Head of caudate nucleus (tissue), 42 donors: ENCODE measurements at regions of chr20 and their contacts with region 1.

Region 1: DNA sequence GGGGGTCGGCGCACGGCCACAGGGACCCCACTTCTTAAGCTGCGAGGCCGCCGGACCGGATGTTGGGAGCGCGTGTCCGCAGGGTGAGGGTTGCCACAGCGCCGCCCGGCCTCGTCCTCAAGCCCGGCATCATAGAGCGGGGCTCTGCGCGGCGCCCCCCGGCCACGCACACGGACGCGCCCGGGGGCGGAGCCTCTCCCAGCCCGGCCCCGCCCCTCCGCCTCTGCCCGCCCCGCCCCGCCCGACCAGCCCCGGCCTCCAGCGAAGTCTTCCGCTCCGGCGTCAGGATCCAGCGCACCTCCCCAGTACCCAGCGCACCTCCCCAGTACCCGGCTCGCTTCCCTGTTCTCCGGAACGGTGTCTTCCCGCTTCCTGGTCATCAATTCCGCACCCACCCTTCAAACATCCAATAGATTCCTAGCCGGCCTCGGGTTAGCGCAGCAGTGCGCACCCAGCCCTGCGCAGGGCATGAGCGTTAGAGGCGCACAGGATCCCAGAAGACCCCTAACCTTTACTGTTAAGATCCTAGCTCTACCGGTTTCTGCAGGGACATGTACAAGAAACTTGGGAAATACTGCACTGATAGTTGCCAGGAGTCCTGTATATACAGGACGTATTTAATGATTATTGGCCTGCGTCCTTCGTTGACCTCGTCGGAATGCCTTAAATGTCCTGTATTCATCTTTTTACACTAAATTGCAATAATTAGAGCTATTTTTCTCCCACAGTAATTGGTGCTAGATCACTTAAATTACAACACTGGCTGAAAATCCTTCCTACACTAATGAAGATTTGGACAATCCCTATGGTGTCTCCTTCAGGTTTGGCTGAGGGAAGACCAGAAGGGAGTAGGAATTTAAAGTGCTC is 535 bp upstream of the DNAAF9 start:
- DNase-seq: peak; percentile 46 to 93 (median 82)

Region 2: GRCh38 chr20:3470627-3471396 is 62.8 kb after region 1 on chr20 and contains the start of gene ATRN:
- intact Hi-C with region 1: loop called (anchors 5 kb)
- DNase-seq: peak; percentile 62 to 95 (median 90)